Tibial artery (tissue), 4 donors: ENCODE measurements at regions of chr2 and their contacts with region 1.

Region 1: GRCh38 chr2:217886720-217887309 is 116.0 kb downstream of the TNS1 start:
- DNase-seq: peak in 1 of 2 donors; percentile 86
- H3K4me3 ChIP-seq: no peak overlapping the region
- H3K27ac ChIP-seq: peak overlapping the region; percentile 95 to 98
- H3K4me1 ChIP-seq: peaks cover 0 to 77% (median 32%) of the 10 kb centered on the region in 4 donors
- H3K27me3 ChIP-seq: no peaks in the 10 kb centered on the region
- CTCF ChIP-seq: peak; percentile 73 to 82

Region 2: GRCh38 chr2:216013080-216013909 is 1873.5 kb before region 1 on chr2 and contains the start of gene MREG:
- intact Hi-C with region 1: loop called (anchors 10 kb)
- DNase-seq: peak; percentile 61 to 73
- H3K4me3 ChIP-seq: peak within 1 kb of the TSS; percentile 59 to 71
- H3K27ac ChIP-seq: peak within 1 kb of the TSS; percentile 33 to 51
- H3K4me1 ChIP-seq: peaks cover 0 to 8% (median 3%) of the 10 kb centered on the region in 4 donors
- H3K27me3 ChIP-seq: no peaks in the 10 kb centered on the region
- CTCF ChIP-seq: peak; percentile 45 to 73

Region 3: GRCh38 chr2:217775920-217776492 is 110.8 kb before region 1 on chr2:
- intact Hi-C with region 1: no loop called
- DNase-seq: no peak
- H3K4me3 ChIP-seq: no peak overlapping the region
- H3K27ac ChIP-seq: no peak overlapping the region
- H3K4me1 ChIP-seq: peaks cover 0 to 11% (median 0%) of the 10 kb centered on the region in 4 donors
- H3K27me3 ChIP-seq: no peaks in the 10 kb centered on the region
- CTCF ChIP-seq: no peak

Region 4: DNA sequence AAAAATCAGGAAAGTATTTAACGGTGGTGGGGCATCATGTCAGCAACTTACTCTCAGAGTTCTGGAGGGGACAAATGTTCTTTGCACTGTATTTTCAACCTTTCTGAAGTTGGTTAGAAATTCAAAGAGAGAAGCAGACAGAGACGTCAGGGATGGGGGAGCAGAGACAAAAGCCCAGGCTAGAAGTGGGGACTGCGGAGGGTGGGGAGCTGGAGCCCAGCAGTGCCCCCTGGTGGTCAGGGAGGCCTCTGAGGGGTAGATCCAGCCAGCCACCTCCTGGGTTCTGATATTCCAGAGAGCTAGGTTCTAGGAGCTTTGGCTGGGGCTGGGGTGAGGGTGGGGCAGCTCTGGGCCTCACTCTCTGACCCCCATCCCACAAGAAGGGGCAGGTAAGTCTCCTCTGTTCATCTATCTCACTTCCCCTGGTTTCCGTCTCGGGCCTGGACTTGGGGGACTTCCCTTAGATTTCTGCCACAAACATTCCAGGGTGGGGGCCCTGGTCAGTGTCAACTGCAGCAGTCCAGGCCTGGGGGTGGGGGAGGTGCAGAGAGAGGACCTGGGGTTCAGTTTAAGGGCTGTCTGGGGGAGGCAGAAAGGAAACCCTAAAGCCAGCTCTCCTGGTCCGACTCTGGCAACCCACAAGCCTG is 107.1 kb after region 1 on chr2:
- intact Hi-C with region 1: loop called (anchors 5 kb)
- DNase-seq: peak in 1 of 2 donors; percentile 84
- H3K4me3 ChIP-seq: no peak overlapping the region
- H3K27ac ChIP-seq: peak overlapping the region; percentile 72 to 74
- H3K4me1 ChIP-seq: peaks cover 0 to 45% (median 38%) of the 10 kb centered on the region in 4 donors
- H3K27me3 ChIP-seq: no peaks in the 10 kb centered on the region
- CTCF ChIP-seq: peak; percentile 68 to 80